Panc1 (cell line): ENCODE measurements at regions of chr2 and their contacts with region 1.

Region 1: DNA sequence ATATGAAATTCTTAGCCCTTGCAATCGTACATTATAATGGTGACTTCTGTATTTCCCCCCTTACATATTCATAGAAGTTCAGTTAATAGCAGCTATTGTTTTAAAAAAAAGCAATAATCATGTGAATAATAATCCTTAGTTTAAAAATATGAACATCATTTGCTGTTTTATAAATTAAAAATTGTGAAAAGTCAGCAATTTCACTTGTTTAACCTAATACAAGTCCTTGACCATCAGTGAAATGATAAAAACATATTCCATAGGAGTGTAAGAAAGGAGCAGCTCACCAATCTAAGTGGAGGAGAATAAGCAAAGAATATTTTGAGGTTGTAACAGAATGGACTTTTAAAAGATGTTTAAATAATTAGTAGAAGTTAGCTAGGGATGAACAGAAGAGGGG is 650.2 kb downstream of the SUCLG1 start:
- DNase-seq: no peak
- ATAC-seq: no peak
- H3K4me3 ChIP-seq: no peak overlapping the region
- H3K27ac ChIP-seq: no peak overlapping the region
- H3K4me1 ChIP-seq: no peaks in the 10 kb centered on the region
- H3K27me3 ChIP-seq: no peaks in the 10 kb centered on the region
- CTCF ChIP-seq: no peak

Region 2: DNA sequence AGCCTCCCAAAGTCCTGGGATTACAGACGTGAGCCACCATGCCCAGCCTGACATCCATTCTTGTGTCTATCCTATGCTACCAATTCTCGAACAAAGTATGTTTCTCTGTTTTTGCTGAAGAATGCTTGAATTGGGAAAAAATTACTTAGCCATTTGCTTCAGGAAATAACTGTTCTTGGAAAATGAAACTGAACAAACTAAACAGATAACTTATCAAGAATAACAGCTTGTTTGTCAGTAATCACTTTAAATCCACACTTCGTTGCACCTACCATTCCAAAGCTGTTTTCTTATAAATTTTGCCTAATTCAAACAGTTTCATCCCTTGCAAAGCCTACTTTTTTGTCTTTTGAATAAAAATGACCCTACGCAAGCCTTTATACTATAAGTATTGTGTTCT is 22.7 kb before region 1 on chr2:
- CTCF ChIA-PET with region 1: no interaction called
- POLR2A ChIA-PET with region 1: interaction called, 12 read pairs
- in situ Hi-C with region 1: no loop called
- intact Hi-C with region 1: no loop called
- DNase-seq: no peak
- ATAC-seq: no peak
- H3K4me3 ChIP-seq: no peak overlapping the region
- H3K27ac ChIP-seq: no peak overlapping the region
- H3K4me1 ChIP-seq: no peaks in the 10 kb centered on the region
- H3K27me3 ChIP-seq: no peaks in the 10 kb centered on the region
- CTCF ChIP-seq: no peak

Region 3: GRCh38 chr2:83859553-83859952 is 50.7 kb after region 1 on chr2:
- CTCF ChIA-PET with region 1: no interaction called
- POLR2A ChIA-PET with region 1: no interaction called
- in situ Hi-C with region 1: no loop called
- intact Hi-C with region 1: no loop called
- DNase-seq: no peak
- ATAC-seq: no peak
- H3K4me3 ChIP-seq: no peak overlapping the region
- H3K27ac ChIP-seq: no peak overlapping the region
- H3K4me1 ChIP-seq: no peaks in the 10 kb centered on the region
- H3K27me3 ChIP-seq: no peaks in the 10 kb centered on the region
- CTCF ChIP-seq: no peak